ENCODE measurements at regions of chr1 and their contacts with region 1.

Region 1: GRCh38 chr1:43293896-43294760 is 6.7 kb upstream of the TIE1 start:
- DNase-seq: no peak
- ATAC-seq: no peak
- H3K4me3 ChIP-seq: no peak overlapping the region
- H3K27ac ChIP-seq: no peak overlapping the region
- H3K4me1 ChIP-seq: peaks cover 13% of the 10 kb centered on the region
- H3K27me3 ChIP-seq: no peaks in the 10 kb centered on the region
- CTCF ChIP-seq: no peak
- EP300 ChIP-seq: no peak
- POLR2A ChIP-seq: no peak
- RAD21 ChIP-seq: no peak

Region 2: GRCh38 chr1:43152866-43153265 is 141.3 kb before region 1 on chr1:
- CTCF ChIA-PET with region 1: no interaction called
- POLR2A ChIA-PET with region 1: no interaction called
- RAD21 ChIA-PET with region 1: no interaction called
- SMC1A ChIA-PET with region 1: no interaction called
- in situ Hi-C with region 1: no loop called
- intact Hi-C with region 1: no loop called
- DNase-seq: no peak
- ATAC-seq: no peak
- H3K4me3 ChIP-seq: no peak overlapping the region
- H3K27ac ChIP-seq: no peak overlapping the region
- H3K4me1 ChIP-seq: no peaks in the 10 kb centered on the region; the same call in 1 of the 2 replicates
- H3K27me3 ChIP-seq: peaks cover 3 to 4% of the 10 kb centered on the region in 2 experiments
- CTCF ChIP-seq: no peak
- EP300 ChIP-seq: no peak
- POLR2A ChIP-seq: no peak
- RAD21 ChIP-seq: no peak

Region 3: GRCh38 chr1:43358746-43359693 is 64.9 kb after region 1 on chr1 and contains the start of gene CDC20:
- CTCF ChIA-PET with region 1: interaction called, 3 read pairs
- POLR2A ChIA-PET with region 1: interaction called, 5 read pairs
- RAD21 ChIA-PET with region 1: interaction called, 8 read pairs
- SMC1A ChIA-PET with region 1: interaction called, 10 read pairs
- in situ Hi-C with region 1: no loop called
- intact Hi-C with region 1: no loop called
- DNase-seq: peak; percentile 89
- ATAC-seq: peak; percentile 98
- H3K4me3 ChIP-seq: peak within 1 kb of the TSS; percentile 92
- H3K27ac ChIP-seq: peak within 1 kb of the TSS; percentile 87
- H3K4me1 ChIP-seq: peaks cover 10% of the 10 kb centered on the region
- H3K27me3 ChIP-seq: no peaks in the 10 kb centered on the region
- CTCF ChIP-seq: no peak
- EP300 ChIP-seq: no peak
- POLR2A ChIP-seq: peak; percentile 91
- RAD21 ChIP-seq: no peak
- polyA plus RNA-seq, gene CDC20: 36.3 to 63.1 TPM

Region 4: GRCh38 chr1:43367904-43368645 is 73.9 kb after region 1 on chr1 and contains the start of gene ELOVL1:
- CTCF ChIA-PET with region 1: no interaction called
- POLR2A ChIA-PET with region 1: interaction called, 3 read pairs
- RAD21 ChIA-PET with region 1: interaction called, 5 read pairs
- SMC1A ChIA-PET with region 1: interaction called, 9 read pairs
- in situ Hi-C with region 1: no loop called
- intact Hi-C with region 1: loop called (anchors 5 kb)
- DNase-seq: peak; percentile 41
- ATAC-seq: peak; percentile 89
- H3K4me3 ChIP-seq: peak within 1 kb of the TSS; percentile 100
- H3K27ac ChIP-seq: peak within 1 kb of the TSS; percentile 95
- H3K4me1 ChIP-seq: peaks cover 8% of the 10 kb centered on the region
- H3K27me3 ChIP-seq: no peaks in the 10 kb centered on the region
- CTCF ChIP-seq: peak in 2 of 3 experiments; percentile 24 to 43; a peak in 4 of 6 replicates
- EP300 ChIP-seq: no peak
- POLR2A ChIP-seq: peak; percentile 94
- RAD21 ChIP-seq: no peak
- polyA plus RNA-seq, gene ELOVL1: 62.7 to 68.4 TPM